ENCODE measurements at regions of chr15 and their contacts with region 1.

Region 1: DNA sequence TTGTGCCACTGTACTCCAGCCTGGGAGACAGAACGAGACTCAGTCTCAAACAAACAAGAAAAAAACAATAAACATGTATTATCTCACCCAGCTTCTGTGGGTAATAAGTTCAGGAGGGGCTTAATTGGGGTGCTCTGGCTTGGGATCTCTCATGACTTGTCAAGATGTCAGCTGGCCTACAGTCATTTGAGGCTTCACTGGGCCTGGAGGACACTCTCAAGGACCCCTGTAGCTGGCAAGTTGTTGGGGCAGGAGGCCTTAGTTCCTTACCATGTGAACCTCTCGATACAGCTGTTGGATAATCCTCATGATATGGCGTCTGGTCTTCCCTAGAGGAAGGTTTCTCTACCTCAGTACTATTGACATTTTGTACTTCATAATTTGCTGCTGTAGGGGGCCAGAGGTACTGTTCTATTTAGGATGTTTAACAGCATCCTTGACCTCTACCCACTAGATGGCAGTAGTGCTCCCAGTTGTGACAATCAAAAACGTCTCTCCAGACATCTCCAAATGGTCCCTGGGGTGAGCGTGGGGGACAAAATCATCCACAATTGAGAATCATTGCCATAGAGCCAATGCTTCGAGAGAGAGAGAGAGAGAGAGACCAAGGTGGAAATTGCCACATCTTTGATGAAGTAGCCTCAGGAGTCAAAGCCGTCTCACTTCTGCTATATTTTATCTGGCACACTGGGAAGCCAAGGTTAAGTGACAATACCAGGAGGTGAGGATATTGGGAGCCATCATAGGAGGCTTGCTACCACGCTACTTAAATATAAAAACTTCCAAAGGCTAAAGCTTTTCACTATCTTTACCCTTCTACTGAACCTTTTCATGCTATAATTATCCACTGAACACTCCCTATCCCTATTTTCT is 23.9 kb upstream of the SLTM start:
- DNase-seq: peak; percentile 48
- H3K4me3 ChIP-seq: no peak overlapping the region
- H3K27ac ChIP-seq: no peak overlapping the region
- H3K4me1 ChIP-seq: peaks cover 0 to 7% (median under 1%) of the 10 kb centered on the region in 4 donors
- H3K27me3 ChIP-seq: no peaks in the 10 kb centered on the region
- CTCF ChIP-seq: peak; percentile 54 to 79 (median 70)
- EP300 ChIP-seq: no peak
- POLR2A ChIP-seq: no peak

Region 2: GRCh38 chr15:58856086-58856485 is 101.3 kb before region 1 on chr15:
- in situ Hi-C with region 1: no loop called
- intact Hi-C with region 1: no loop called
- DNase-seq: no peak
- H3K4me3 ChIP-seq: no peak overlapping the region
- H3K27ac ChIP-seq: no peak overlapping the region
- H3K4me1 ChIP-seq: peaks cover 0 to 3% (median 0%) of the 10 kb centered on the region in 4 donors
- H3K27me3 ChIP-seq: no peaks in the 10 kb centered on the region
- CTCF ChIP-seq: no peak
- EP300 ChIP-seq: no peak
- POLR2A ChIP-seq: no peak

Region 3: DNA sequence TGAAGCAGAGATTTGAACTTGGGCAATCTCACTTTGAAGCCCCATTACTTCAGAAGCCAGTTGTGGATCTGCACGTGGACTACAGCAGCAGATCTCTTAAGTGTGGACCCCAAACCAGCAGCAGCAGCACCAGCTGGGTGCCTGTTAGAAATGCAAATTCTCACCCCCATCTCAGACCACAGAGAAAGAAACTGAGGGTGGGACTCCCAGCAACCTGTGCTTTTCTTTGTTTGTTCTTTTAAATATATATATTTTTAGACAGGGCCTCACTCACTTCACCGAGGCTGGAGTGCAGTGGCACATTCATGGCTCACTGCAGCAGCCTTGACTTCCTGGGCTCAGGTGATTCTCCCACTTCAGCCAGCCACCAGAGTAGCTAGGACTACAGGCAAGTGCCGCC is 77.0 kb before region 1 on chr15:
- in situ Hi-C with region 1: no loop called
- intact Hi-C with region 1: no loop called
- DNase-seq: no peak
- H3K4me3 ChIP-seq: no peak overlapping the region
- H3K27ac ChIP-seq: no peak overlapping the region
- H3K4me1 ChIP-seq: no peaks in the 10 kb centered on the region
- H3K27me3 ChIP-seq: no peaks in the 10 kb centered on the region
- CTCF ChIP-seq: no peak
- EP300 ChIP-seq: no peak
- POLR2A ChIP-seq: no peak

Region 4: GRCh38 chr15:59185725-59186124 is 228.4 kb after region 1 on chr15:
- in situ Hi-C with region 1: no loop called
- intact Hi-C with region 1: no loop called
- DNase-seq: no peak
- H3K4me3 ChIP-seq: no peak overlapping the region
- H3K27ac ChIP-seq: no peak overlapping the region
- H3K4me1 ChIP-seq: no peaks in the 10 kb centered on the region
- H3K27me3 ChIP-seq: no peaks in the 10 kb centered on the region
- CTCF ChIP-seq: no peak
- EP300 ChIP-seq: no peak
- POLR2A ChIP-seq: no peak

Region 5: DNA sequence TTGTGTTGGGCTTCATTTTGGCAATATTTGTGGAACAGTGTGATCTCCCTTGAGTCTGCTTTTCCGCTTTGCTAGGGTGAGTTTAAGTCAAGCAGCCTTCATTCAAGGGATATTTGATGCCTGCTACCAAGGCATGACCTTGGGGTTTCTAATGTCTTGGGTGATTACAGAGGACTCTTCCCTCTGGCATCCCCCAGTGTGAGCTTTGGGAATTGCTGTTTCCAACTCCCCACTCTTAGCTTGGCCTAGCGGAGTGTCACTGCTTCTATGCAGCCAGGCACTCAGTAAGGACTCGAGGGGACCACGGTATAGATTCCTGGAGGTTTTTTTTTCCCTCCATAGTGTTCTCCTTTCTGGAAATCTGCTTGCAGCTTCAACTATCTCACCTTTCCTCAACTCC is 675.4 kb after region 1 on chr15:
- in situ Hi-C with region 1: loop called in 1 of 4 experiments (anchors 25 kb)
- intact Hi-C with region 1: no loop called
- DNase-seq: no peak
- H3K4me3 ChIP-seq: no peak overlapping the region
- H3K27ac ChIP-seq: no peak overlapping the region
- H3K4me1 ChIP-seq: no peaks in the 10 kb centered on the region
- H3K27me3 ChIP-seq: no peaks in the 10 kb centered on the region
- CTCF ChIP-seq: peak in 1 of 5 experiments; percentile 5
- EP300 ChIP-seq: no peak
- POLR2A ChIP-seq: no peak

Region 6: DNA sequence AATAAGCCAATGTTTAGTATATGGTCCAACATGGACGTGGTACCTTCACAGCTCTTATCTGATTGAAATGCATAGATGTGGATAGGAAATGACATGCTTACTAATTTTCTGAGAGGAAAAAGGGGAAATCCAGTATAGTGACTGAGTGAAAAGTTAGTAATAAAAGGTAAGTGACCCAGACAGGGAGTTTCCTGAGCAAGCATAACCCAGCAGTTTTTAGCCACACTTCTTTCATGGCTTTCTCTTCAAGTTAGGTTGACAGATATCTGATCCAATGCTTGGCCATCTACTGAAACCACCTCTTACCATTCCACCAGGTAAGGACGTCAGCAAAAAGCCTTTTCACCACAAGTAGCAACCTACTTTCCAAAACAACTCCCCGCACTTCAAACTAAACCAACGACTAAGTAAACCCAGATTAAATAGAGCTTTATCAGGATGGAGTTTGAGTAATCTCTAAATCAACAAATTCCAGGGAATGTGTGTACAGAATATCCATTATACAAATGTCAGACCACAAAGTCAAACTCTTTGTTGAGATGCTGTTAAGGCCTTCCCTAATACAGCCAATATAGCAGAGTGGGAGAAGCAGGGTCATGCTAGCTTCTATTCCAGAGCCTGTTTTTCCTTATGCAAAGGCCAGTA is 1942.1 kb after region 1 on chr15:
- in situ Hi-C with region 1: no loop called
- intact Hi-C with region 1: no loop called
- DNase-seq: no peak
- H3K4me3 ChIP-seq: no peak overlapping the region
- H3K27ac ChIP-seq: no peak overlapping the region
- H3K4me1 ChIP-seq: no peaks in the 10 kb centered on the region
- H3K27me3 ChIP-seq: no peaks in the 10 kb centered on the region
- CTCF ChIP-seq: no peak
- EP300 ChIP-seq: no peak
- POLR2A ChIP-seq: no peak

Measured in transverse colon (tissue), 4 donors.